ENCODE measurements at regions of chr10 and their contacts with region 1.

Region 1: DNA sequence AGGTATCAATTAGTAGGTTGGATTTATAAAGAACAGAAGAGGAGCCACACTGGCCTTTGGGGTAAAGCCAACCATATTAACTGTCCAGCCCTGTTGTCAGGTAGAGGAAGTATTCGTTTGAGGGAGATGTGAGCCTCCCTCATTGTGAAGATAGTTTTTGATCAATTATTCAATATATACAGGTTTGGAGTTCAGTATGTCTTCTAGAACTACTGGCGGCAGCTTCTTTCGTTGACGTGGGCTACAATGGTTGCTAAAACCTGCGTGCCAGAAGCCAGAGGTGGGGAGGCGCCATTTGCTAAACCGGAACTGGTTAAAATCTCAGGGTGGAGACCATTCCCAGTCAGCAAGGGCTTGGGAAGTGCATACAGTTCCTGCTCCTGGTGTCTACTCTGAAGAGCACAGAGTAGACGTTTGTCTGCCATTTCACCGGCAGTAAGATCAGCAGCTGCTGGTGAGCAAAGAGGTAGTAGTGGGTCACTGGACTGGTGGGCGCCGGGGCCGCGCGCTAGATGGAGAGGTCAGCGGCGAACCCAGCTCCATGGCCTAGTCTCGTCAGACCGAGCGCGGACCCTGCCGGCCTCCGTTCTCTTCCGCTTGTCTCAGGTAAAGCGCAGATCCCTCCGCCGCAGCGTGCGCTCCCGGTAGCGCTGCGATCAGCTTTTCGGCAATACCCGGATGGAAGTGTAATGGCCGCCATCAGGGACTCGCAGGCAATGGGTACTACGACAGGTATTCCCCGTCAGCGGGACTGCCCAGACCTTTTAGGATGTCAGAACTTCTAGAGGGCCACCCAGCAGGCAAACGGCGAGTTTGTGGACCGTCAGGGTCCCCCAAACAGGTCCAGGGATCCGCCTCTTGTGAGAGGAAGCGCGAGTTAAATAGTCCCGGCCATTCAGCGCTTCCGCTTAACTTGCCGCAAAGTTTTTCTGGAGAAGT is at the start of gene ZNF518A:
- DNase-seq: peak; percentile 95
- total RNA-seq, gene ZNF518A: 12.7 TPM

Region 2: DNA sequence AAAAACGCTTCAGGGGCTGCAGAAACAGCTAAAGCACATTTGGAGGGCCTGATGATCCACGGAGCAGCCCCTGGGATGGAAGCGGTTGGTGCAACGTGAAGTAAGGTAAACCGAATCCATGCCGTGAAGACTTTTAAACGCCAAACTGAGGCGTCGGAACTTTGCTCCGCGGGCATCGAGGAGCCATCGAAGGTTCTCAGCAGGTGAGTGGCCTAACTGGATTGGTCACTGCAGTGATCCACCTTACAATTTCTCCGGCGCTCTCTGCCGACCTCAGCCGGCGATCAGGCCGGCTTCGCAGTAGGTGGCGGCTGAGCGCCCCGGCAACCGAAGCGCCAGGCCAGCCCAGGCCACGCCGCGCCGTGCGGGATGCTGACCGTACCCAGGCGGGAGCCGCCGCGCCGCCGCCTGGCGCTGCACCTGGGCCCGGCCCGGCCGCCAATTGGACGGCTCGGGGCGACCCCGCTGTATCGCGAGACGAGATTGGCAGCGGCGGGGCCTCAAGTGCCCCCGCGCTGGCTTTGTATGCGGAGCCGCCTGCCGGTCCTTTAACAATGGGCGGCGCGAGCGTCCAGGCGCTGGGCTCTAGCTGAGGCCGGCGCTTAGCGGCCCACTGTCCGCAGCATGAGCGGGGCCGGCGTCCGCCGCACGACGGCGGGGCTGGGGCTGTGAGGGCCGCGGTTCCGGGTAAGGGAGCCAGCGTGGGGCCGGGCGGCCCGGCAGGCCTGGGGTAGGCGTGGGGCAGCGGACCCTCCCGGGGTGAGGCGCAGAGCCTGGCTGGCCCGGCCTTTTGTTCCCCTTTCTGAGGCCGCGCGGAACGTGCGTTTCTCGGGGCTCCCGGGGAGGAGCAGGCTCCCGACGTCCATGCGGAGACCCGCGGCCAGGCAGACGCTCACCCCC is 86.4 kb before region 1 on chr10 and contains the start of gene CCNJ:
- intact Hi-C with region 1: loop called (anchors 5 kb)
- DNase-seq: peak; percentile 92
- total RNA-seq, gene CCNJ: 3.4 TPM

Region 3: DNA sequence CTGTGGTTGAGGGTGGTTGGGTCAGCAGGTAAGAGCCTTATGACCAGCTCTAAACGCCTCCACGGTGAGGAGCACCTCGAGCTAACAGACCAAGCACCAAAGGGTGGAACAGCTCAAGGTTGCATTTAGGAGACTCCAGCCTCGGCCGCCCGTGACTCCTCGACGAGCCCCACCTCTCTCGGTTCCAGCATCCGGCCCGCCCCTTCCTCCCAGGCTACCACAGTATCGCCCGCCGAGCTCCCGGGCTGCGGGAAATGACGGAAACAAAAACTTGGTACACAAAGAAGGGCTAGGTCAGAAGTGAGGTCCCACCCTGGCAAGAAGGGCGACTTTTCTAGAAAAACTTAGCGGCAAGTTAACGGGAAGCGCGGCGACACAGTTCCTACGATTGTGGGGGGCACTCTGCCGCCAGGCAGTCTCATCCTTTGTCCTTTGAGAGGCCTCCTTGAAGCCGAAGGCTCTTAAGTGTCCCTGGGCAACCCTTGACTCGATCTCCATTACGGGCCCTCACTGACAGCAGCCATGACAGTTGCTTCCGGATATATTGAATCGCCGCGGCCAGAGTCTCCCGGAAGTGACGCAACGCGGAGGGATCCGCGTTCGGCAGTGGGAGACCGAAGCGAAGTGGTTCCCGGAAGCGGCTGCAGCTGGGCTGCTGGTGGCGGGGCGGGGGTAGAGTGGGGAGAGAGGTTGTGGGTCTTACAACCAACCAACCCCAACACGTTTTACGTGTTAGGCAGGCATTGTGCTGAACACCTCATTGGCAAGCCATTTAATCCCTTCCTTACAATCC is 39.8 kb before region 1 on chr10:
- intact Hi-C with region 1: loop called (anchors 1 kb)
- DNase-seq: peak; percentile 94

Region 4: DNA sequence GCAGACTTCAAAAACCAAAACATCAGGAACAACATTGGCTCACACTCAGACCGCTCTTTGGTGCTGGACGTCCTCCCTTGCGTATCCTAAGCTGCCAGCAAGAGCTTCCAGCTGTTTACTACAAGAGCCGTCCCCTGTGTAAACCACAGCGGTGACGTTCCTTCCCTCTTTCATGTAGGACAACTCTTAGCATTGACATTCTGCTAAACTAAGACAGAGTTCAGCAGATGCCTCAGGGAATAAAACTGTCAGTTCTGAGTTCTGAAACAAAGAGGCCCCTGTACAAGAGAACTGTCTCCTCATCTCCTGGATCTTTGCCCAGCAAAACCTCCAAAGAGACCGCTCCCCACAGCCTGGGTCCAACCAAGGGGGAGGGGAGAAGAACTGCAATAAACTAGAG is 287.0 kb after region 1 on chr10:
- intact Hi-C with region 1: no loop called
- DNase-seq: no peak

Measured in cardiac septum (tissue), 1 donor.